ENCODE measurements at regions of chr3 and their contacts with region 1.

Region 1: GRCh38 chr3:39378088-39378487 is 5.1 kb upstream of the SLC25A38 start:
- DNase-seq: peak; percentile 67
- H3K4me3 Mint-ChIP-seq: no peak overlapping the region
- H3K27ac Mint-ChIP-seq: no peak overlapping the region
- H3K4me1 Mint-ChIP-seq: peaks cover 2% of the 10 kb centered on the region
- H3K27me3 Mint-ChIP-seq: no peaks in the 10 kb centered on the region
- CTCF ChIP-seq: peak; percentile 77

Region 2: DNA sequence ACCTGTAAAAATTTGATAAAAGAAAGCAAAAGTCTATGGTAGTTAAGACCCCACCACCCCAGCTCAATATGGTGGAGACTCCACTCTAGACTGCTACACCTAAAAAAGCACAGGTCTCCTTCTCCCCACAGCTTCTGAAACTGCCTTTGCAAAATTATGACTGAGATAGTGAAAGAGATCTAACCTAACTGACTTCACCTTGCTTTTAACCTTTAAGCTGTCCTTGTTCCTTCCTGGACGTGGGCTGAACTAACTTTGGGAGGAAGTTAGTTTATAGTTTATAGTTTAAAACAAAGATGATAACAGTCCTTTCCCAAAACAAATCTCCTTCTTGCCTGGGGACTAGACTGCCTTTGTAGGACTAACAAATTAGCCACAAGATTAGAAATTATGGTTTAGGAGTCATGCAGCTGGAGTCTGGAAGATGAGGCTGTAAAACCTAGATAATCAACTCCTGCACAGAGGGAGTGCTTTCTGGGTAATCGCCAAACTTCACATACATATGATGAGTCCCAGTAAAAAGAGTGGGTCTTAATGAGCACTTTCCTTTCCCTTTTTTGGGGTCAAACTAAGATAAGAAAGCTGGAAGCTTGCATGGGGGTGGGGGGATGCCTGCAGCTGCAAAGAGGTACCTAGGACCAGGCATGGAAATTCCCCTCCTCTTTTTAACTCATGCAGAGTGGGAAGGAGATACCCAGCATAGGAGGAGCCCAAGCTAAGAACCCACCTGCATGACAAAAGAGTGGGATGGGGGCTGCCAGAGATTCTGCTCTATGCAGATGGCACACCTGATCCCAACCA is 31.1 kb before region 1 on chr3:
- CTCF ChIA-PET with region 1: interaction called, 10 read pairs
- POLR2A ChIA-PET with region 1: no interaction called
- intact Hi-C with region 1: no loop called
- DNase-seq: no peak
- H3K4me3 Mint-ChIP-seq: no peak overlapping the region
- H3K27ac Mint-ChIP-seq: no peak overlapping the region
- H3K4me1 Mint-ChIP-seq: peaks cover 6% of the 10 kb centered on the region
- H3K27me3 Mint-ChIP-seq: no peaks in the 10 kb centered on the region
- CTCF ChIP-seq: no peak